HEK293T (cell line): ENCODE measurements at regions of chr19 and their contacts with region 1.

Region 1: DNA sequence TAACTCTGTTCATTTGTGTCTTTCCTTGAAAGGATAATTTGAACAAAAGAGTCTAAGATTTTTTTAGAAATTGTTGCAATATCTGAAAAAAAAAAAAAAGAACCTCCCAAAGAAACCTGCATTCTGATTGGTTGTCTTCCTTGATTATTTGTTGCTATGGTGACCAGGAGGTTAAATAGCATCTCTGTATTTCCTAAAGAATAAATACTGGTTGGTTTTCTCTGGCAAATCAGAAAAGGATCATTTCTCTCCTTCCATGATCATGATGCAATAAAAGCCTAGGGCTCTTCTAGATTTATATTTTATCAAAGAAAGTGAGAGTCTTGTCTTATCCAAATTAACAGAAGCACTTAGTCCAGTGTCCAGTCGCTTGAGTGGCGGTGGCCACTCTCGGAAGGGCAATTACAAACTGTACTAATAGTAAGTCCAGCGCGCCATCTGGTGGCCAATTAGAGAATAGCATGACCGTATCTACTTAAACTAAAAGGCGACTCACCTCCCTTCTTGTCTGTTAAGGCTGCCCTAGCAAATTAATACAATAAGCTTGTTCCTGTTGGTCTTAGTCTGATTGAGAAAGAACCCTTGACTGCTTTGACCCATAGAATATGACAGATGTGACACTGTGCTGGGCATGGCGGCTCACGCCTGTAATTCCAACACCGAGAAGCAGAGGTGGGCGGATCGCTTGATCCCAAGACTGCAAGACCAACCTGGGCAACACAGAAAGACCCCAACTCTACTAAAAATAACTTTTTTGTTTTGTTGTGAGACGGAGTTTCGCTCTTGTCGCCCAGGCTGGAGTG is 47.0 kb upstream of the PNMA8B start:
- DNase-seq: peak; percentile 68

Region 2: DNA sequence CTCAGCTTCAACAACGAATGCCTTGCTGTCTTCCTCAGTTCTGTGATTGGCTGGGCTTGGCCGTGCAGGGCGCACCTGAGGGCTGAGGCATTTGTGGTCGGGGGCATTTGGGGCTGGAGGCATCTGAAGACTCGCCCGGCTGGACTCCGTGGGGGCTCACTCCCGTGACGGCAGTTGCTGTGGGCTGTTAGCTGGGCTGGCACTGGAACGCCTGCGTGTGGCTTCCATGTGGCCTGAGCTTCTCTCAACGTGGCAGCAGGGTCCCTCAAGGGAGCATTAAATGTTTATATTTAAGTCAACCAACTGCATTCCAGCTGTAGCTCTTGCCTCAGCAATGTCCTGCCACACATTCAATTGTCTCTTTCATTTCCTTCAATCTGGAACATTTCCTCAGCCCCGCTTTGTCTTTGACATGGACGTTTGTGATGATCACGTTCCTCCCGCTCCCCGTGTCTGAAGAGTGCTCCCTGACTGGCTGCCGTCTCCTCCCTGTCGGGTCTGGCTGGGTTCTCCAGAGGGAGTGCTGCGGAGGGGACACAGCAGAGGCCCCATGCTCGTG is 150.3 kb before region 1 on chr19:
- CTCF ChIA-PET with region 1: interaction called, 12 read pairs
- POLR2A ChIA-PET with region 1: no interaction called
- DNase-seq: no peak

Region 3: DNA sequence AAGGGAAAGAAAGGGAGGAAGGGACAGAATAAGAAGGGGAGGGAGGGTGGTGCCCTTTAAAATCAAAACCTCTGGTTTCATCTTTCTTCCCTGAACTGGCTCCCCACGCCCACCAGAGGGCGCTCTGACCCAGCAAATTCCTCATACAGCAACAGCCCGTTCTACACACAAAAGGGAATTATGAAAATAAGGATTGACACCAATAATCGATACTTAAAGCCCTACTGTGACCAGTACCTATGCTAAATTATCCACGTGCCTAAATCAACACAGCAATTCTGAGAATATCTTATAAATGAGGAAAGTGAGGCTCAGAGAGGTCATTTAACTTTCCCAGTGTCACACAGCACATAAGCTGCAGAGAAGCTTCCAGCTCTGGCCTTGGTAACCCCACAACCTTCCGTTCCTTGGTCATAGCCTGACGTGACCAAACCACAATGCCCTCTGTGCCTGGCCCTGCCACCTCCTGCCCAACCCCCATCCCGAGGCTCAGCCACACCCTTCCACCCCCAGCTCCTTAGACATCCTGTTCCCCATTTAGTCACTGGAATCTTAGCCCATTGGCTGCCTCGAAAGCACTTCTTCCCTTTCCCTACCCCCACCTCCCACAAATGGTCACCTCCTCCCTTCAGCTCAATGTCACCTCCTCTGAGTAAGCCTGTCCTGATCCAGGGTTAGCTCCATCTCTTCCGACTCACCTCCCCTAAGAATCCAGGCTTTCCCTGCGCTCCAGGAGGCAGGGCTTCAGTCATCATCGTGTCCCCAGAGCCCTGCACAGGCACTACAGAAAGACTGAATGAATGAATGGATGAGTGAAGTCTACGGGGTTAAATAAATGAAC is 12.8 kb before region 1 on chr19:
- CTCF ChIA-PET with region 1: interaction called, 14 read pairs
- POLR2A ChIA-PET with region 1: no interaction called
- DNase-seq: peak; percentile 77